Psoas muscle (tissue), 8 donors: ENCODE measurements at regions of chr7 and their contacts with region 1.

Region 1: DNA sequence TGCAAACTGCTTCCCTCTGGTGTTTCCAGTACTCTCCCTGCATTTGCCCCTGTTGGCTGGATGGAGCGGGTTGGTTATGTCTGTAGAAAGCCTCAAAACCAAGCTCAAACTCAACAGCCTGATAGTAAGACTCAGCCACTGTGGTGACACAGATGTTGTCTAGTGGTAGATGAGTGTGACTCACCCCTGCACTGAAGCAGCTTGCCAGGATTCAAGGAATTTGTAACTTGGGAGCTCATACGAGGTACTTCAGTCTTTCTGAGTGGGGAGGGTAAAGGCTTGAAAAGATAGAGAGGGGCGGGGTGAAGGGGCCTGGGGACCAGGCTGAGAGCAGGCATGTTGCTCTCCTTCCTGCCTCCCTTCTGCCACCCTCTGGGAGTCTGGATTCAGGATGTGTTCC is 22.9 kb upstream of the AQP1 start:
- DNase-seq: peak in 1 of 2 donors; percentile 48
- ATAC-seq: peak in 3 of 4 donors; percentile 28 to 57 (median 43)
- H3K4me3 ChIP-seq: no peak overlapping the region
- H3K27ac ChIP-seq: no peak overlapping the region
- H3K4me1 ChIP-seq: peaks cover under 1% of the 10 kb centered on the region
- H3K27me3 ChIP-seq: no peaks in the 10 kb centered on the region
- CTCF ChIP-seq: no peak

Region 2: GRCh38 chr7:30842542-30843451 is 46.0 kb before region 1 on chr7:
- intact Hi-C with region 1: loop called in 1 of 2 experiments (anchors 5 kb)
- DNase-seq: no peak
- ATAC-seq: no peak
- H3K4me3 ChIP-seq: no peak overlapping the region
- H3K27ac ChIP-seq: no peak overlapping the region
- H3K4me1 ChIP-seq: no peaks in the 10 kb centered on the region
- H3K27me3 ChIP-seq: no peaks in the 10 kb centered on the region
- CTCF ChIP-seq: no peak

Region 3: DNA sequence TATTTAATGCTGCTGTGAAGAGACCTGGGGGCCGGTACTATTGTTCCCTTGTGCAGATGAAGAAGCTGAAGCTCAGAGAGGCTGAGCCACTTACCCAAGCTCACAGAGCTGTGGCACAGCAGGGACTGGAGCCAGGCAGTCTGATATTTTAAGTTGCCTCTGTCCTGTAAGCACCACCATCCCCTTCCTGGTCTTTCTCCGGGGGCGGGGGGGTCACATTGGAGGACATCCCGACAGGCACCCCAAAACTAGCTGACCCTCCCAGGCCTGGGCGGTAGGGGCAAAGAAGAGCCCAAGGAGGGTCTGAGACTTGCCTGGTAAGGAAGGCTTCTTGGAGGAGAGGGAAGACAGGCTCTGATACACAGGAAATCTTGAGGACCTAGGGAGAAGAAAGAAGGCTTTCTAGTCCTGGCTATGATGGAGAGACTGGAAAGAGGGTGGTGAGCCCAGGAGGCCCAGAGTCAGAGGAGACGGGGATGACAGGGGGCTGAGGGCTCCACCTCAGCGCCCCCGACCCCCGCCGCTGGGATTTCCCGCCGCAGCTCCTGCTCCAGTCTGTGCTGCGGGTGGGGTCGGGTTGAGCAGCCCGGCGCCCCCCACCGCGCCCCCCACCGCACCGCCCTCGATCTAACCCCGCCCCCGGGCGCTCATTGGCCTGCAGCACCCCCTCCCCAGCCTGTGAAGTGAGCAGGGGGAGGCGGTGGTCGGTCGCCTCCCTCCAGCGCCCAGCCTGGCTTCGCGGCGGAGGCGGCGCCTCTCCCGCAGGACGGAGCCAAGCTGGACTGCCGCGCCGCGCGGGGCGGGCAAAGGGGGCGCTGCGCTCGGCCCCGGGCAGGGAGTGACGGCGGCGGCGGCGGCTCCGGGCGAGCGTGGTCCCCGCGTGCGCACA is 163.1 kb after region 1 on chr7 and contains the start of gene ADCYAP1R1:
- intact Hi-C with region 1: no loop called
- DNase-seq: peak; percentile 37 to 68
- ATAC-seq: peak; percentile 13 to 71 (median 46)
- H3K4me3 ChIP-seq: peak within 1 kb of the TSS; percentile 62
- H3K27ac ChIP-seq: no peak within 1 kb of the TSS
- H3K4me1 ChIP-seq: no peaks in the 10 kb centered on the region
- H3K27me3 ChIP-seq: peaks cover 0 to 27% (median 16%) of the 10 kb centered on the region in 3 donors
- CTCF ChIP-seq: no peak
- total RNA-seq, gene ADCYAP1R1: 0.79 to 6.6 (median 1.8) TPM